ENCODE measurements at regions of chr5 and their contacts with region 1.

Region 1: DNA sequence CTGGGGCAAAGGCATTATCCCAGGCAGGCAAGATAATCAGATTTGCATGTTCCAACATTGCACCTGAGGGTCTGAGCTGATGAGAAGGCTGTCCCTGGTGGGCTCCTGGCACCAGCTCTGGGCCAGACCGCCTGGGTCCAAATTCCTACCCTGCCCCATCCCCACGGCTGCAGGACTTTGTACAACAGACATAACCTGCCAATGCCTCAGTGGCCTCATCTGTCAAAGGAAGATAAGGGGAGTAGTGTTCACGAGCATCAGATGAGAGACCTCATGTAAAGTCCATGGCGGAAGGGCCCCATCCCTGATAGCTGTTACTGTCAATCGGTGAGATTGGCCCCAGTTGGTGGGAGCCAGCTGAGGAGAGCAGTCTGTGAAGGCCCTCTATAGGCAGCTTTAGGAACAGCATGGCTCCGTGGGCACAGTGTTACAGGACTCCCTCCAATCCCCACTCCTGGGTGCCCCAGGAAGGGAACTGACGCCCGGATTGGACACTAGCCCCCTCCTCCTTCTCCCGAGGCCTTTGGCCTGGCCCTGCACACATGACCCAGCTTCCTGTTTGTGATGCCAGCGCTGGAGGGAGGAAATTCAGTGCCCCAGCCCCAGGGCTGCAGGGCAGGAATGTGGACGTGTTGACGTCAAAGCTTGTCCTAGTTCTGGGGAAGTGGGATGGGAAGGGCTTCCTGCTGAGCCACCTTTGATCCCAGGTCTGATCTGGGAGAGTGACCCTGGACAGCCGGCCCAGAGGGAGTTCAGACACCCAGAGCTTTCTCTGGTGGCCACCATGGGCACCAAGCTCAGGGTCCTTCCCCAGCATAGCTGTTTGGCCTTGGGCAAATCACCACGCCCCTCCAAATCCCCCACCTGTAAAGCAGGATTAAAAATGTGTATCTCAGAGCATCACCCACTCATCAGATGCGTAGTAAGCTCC is 56.2 kb downstream of the DUSP1 start:
- DNase-seq: peak; percentile 83
- CTCF ChIP-seq: peak; percentile 71

Region 2: GRCh38 chr5:172044631-172045314 is 670.0 kb before region 1 on chr5:
- in situ Hi-C with region 1: no loop called
- DNase-seq: no peak
- CTCF ChIP-seq: no peak

Region 3: DNA sequence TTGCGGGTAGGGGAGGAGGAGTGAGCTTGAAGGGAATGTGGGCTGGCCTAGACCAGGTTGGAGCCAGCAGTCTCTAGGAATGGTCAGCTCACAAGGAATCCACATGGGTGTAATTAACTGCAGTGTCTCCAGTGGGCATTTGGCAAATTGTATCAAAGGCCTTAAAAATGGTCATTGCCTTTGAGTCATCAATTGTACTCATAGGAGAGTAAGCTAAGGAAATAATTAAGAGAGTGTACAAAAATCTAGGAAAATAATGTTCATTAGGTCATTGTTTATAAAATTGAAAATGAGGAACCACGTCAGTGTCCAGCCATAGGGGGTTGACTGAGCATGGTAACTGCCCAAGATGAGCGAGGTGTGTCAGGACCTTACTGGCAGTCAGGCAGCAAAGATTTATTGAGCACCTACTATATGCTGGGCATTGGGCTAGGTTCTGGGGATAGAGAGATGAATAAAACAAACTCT is 214.6 kb after region 1 on chr5:
- in situ Hi-C with region 1: loop called (anchors 5 kb)
- DNase-seq: no peak
- CTCF ChIP-seq: no peak